ENCODE measurements at regions of chr2 and their contacts with region 1.

Region 1: DNA sequence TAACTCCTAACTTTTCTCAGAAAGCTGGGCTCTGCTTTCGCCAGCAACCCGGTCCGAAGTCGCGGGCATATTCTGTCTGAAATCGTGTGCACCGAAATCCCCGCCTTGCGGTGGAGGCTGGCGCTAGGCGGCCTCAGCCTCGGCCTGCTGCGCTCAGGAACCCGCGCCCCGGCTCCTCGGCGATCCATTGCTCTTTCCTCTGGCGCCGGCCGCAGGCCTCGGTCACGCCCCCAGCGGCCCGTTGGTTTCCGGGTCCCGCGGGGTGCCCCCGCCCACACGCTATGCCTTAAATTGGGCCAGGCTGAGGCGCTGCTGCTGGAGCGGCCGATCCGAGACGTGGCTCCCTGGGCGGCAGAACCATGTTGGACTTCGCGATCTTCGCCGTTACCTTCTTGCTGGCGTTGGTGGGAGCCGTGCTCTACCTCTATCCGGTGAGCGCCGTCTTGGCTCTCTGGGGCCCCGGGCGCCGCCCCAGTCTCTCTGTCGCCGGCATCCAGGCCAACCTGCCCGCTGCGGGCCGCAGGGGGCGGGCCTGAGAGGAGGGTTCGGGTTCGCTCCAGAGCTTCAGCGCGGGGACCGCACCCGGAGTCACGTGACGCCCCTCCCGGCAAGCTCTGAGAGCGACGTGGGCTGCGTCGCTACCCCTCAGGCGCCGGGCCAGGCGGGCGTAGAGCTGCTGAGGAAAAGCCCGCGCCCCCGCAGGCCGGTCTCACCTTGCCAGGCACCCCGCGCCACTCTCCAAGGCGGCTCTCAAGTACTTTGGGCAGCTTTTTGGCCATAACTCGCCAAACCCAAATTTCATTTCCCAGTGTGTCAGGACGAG is at the start of gene CYP20A1:
- DNase-seq: peak; percentile 97
- H3K4me3 Mint-ChIP-seq: peak within 1 kb of the TSS; percentile 94
- H3K27ac Mint-ChIP-seq: peak within 1 kb of the TSS; percentile 98
- H3K4me1 Mint-ChIP-seq: peaks cover 35% of the 10 kb centered on the region
- H3K27me3 Mint-ChIP-seq: no peaks in the 10 kb centered on the region
- total RNA-seq, gene CYP20A1: 12.0 to 12.2 TPM

Region 2: DNA sequence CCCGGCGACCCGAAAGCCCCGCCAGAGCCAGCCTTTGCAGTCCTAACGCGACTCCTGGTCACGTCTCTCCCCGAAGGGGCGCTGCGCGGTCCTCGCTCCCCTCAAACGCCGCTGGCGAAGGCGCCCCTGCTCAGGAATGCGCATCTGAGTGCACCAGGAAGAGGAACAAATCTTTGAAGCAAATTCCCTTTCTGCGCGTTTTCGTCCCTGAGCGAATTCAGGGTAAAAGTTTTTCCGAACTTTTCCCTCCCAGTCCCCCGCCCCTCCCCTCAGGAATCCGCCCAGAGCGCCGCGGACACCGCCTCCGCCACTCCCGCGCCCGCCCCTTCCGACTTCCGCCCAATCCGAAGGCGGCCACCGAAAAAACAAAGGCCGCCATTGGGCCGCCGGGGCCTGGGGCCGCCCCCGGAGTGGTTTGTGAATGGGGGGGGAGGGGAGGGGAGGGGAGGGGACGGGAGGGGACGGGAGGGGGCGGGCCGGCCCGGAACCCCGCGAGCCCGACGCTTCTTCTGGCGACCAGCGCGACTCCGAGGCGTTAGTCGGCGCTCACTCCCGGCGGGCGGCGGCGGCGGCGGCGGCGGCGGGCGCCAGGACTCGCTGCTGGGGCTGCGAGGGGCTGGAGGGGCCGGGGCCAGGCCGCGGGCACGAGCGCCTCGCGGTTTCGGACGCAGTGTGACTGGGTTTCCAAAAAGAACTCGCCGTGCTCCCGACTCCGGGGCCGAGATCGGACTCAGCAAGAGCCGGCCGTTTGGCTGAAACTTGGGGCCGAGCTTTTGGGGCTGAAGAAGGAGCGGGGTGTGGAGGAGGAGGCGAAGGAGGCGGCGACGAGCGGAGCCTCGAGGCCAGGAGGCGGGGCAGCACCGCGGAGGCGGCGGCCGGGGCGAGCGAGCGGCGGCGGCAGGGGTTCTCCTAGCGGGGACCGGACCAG is 1205.3 kb before region 1 on chr2 and contains the start of gene FZD7:
- CTCF ChIA-PET with region 1: no interaction called
- intact Hi-C with region 1: loop called (anchors 2 kb)
- DNase-seq: peak; percentile 90
- H3K4me3 Mint-ChIP-seq: peak within 1 kb of the TSS; percentile 79
- H3K27ac Mint-ChIP-seq: no peak within 1 kb of the TSS
- H3K4me1 Mint-ChIP-seq: peaks cover 12% of the 10 kb centered on the region
- H3K27me3 Mint-ChIP-seq: peaks cover 18% of the 10 kb centered on the region
- total RNA-seq, gene FZD7: 0.17 to 0.43 TPM

Region 3: GRCh38 chr2:202831242-202832220 is 407.4 kb before region 1 on chr2:
- CTCF ChIA-PET with region 1: no interaction called
- intact Hi-C with region 1: loop called (anchors 2 kb)
- DNase-seq: peak; percentile 80
- H3K4me3 Mint-ChIP-seq: no peak overlapping the region
- H3K27ac Mint-ChIP-seq: no peak overlapping the region
- H3K4me1 Mint-ChIP-seq: peaks cover 10% of the 10 kb centered on the region
- H3K27me3 Mint-ChIP-seq: no peaks in the 10 kb centered on the region

Region 4: GRCh38 chr2:202911512-202912341 is 327.2 kb before region 1 on chr2 and contains the starts of genes CARF and WDR12:
- CTCF ChIA-PET with region 1: no interaction called
- intact Hi-C with region 1: loop called (anchors 1 kb)
- DNase-seq: peak; percentile 95
- H3K4me3 Mint-ChIP-seq: peak within 1 kb of the TSS; percentile 87
- H3K27ac Mint-ChIP-seq: peak within 1 kb of the TSS; percentile 94
- H3K4me1 Mint-ChIP-seq: peaks cover 32% of the 10 kb centered on the region
- H3K27me3 Mint-ChIP-seq: no peaks in the 10 kb centered on the region
- total RNA-seq, gene CARF: 4.0 to 5.4 TPM
- total RNA-seq, gene WDR12: 83.0 to 98.3 TPM

Region 5: DNA sequence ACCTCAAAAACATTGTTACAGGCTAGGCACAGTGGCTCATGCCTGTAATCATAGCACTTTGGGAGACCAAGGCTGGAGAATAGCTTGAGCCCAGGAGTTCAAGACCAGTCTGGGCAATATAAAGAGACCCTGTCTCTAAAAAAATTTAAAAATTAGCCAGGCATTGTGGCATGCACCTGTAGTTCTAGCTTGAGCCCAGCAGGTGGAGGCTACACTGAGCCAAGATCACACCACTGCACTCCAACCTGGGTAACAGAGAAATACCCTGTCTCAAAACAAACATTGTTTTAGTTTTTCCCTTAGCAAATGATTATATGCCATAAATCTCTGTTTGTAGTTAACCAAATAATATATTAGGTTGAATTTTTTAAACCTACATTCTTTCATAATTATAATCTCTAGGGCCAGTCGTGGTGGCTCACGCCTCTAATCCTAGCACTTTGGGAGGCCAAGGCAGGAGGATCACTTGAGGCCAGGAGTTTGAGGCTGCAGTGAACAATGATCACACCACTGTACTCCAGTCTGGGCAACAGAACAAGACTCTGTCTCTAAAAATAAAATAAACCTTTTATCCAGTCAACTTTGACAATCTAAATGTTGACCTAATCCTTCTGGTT is 13.4 kb before region 1 on chr2:
- CTCF ChIA-PET with region 1: interaction called, 5 read pairs
- intact Hi-C with region 1: loop called (anchors 1 kb)
- DNase-seq: peak; percentile 43
- H3K4me3 Mint-ChIP-seq: no peak overlapping the region
- H3K27ac Mint-ChIP-seq: no peak overlapping the region
- H3K4me1 Mint-ChIP-seq: no peaks in the 10 kb centered on the region
- H3K27me3 Mint-ChIP-seq: peaks cover 3% of the 10 kb centered on the region

Region 6: DNA sequence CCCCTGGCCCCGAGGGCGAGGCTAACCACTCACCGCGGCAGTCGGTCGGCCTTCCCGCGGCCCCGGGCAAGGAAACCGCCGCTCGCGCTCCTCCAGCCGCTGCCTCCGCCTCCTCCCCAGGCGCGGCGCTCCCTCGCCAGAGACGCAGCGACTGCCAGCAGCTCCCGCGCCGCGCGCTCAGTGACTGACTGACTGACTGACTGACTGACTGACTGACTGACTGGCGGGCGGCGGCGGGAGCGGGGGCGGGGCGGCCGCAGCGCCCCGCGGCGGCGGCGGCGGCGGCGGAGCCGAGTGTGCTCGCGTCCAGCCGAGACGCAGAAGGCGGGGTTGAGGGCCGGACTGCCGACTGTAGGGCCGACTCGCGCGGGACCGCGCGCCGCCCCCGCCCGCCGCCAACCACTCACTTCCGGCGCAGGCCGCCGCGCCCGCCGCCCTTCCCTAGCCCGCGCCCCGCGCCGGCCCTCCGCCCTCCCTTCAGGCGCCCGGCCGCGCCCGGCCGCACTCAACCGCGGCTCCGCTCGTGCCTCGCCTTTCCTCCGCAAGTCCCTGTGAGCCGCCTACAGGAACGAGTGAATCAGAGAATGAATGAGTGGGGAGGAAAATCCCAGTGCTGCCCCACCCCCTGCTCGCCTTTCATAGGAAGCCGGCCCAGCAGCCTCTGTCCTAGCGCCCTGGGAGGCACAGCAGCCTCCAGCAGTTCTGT is 296.3 kb after region 1 on chr2 and contains the start of gene RAPH1:
- CTCF ChIA-PET with region 1: no interaction called
- intact Hi-C with region 1: loop called (anchors 2 kb)
- DNase-seq: peak; percentile 79
- H3K4me3 Mint-ChIP-seq: peak within 1 kb of the TSS; percentile 82
- H3K27ac Mint-ChIP-seq: peak within 1 kb of the TSS; percentile 61
- H3K4me1 Mint-ChIP-seq: peaks cover 21% of the 10 kb centered on the region
- H3K27me3 Mint-ChIP-seq: peaks cover 6% of the 10 kb centered on the region
- total RNA-seq, gene RAPH1: 8.6 to 11.9 TPM

Region 7: DNA sequence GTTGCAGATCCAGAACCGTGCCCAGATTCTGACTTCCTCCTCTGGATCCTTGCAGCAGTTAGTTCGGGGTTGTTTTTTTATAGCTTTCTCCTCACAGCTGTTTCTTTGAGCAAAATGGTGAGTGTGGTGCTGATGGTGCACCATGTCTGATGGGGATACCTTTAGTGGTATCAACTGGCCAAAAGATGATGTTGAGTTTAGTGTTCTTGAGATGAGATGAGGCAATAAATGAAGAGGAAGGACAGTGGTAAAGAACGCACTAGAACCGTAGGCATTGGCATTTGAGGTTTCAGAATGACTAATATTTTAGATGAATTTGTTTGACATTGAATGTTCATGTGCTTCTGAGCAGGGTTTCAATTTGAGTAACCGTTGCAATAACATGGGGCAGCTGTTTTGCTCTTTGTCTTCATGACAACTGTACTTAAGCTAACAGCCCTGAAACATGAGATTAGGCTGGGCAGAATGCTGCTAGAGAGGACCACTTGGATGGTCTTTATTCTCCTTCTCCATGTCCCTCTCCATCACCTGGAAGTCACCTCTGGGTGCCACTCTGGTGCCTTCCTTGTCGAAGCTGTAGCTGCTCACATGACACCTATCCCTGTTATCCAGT is 632.6 kb after region 1 on chr2:
- CTCF ChIA-PET with region 1: no interaction called
- intact Hi-C with region 1: loop called (anchors 2 kb)
- DNase-seq: peak; percentile 69
- H3K4me3 Mint-ChIP-seq: peak overlapping the region; percentile 92
- H3K27ac Mint-ChIP-seq: peak overlapping the region; percentile 99
- H3K4me1 Mint-ChIP-seq: peaks cover 55% of the 10 kb centered on the region
- H3K27me3 Mint-ChIP-seq: no peaks in the 10 kb centered on the region

Measured in activated naive CD4-positive, alpha-beta T cell treated with anti-CD3 and anti-CD28 coated beads for 36 hours (primary cell).